ENCODE measurements at regions of chr2 and their contacts with region 1.

Region 1: GRCh38 chr2:101361121-101361870 is 26.0 kb downstream of the CREG2 start:
- DNase-seq: peak; percentile 40
- ATAC-seq: peak; percentile 75
- H3K4me3 Mint-ChIP-seq: no peak overlapping the region
- H3K27ac Mint-ChIP-seq: no peak overlapping the region
- H3K4me1 Mint-ChIP-seq: peaks cover 15% of the 10 kb centered on the region
- H3K27me3 Mint-ChIP-seq: no peaks in the 10 kb centered on the region
- CTCF ChIP-seq: no peak

Region 2: GRCh38 chr2:101281482-101281881 is 79.8 kb before region 1 on chr2:
- CTCF ChIA-PET with region 1: no interaction called
- POLR2A ChIA-PET with region 1: no interaction called
- intact Hi-C with region 1: no loop called
- DNase-seq: no peak
- ATAC-seq: no peak
- H3K4me3 Mint-ChIP-seq: no peak overlapping the region
- H3K27ac Mint-ChIP-seq: no peak overlapping the region
- H3K4me1 Mint-ChIP-seq: peaks cover 12% of the 10 kb centered on the region
- H3K27me3 Mint-ChIP-seq: no peaks in the 10 kb centered on the region
- CTCF ChIP-seq: no peak

Region 3: DNA sequence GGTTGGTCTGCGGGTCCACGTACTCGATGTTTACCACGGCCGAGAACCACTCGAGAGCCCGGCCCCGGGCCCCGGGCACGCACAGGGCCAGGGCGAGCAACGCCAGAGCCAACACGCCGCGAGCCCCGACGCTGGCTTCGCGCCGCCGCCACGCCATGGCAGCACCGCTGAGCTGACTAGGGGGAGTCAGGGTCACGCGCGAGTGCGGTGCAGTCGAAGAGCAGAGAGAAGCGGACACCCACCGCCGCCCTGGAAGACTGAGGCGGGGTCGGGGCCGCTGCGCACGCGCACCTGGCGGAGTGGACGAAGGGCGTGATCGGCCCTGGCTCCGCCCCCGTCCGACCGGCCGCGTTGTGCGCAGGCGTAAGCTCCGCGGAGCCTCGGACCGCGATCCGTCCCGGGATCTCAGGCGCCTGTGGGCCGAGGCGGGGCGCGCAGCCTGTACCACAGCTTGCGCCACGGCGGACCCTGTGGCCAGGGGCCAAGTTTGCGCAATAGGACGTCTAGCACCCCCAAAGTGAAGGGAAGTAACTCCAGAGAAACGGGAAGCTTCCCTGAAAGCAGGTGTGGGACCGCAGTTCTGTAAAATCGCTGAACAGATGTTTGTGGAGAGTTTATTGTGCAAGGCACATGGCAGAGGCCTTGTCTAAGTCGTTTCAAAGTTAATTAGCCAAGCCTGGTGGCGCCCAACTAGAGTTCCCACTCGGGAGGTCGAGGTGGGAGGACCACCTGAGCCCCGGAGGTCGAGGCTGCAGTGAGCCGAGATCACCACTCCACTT is 52.7 kb before region 1 on chr2 and contains the start of gene RNF149:
- CTCF ChIA-PET with region 1: no interaction called
- POLR2A ChIA-PET with region 1: no interaction called
- intact Hi-C with region 1: no loop called
- DNase-seq: peak; percentile 91
- ATAC-seq: peak; percentile 77
- H3K4me3 Mint-ChIP-seq: peak within 1 kb of the TSS; percentile 95
- H3K27ac Mint-ChIP-seq: peak within 1 kb of the TSS; percentile 98
- H3K4me1 Mint-ChIP-seq: peaks cover 58% of the 10 kb centered on the region
- H3K27me3 Mint-ChIP-seq: no peaks in the 10 kb centered on the region
- CTCF ChIP-seq: no peak
- total RNA-seq, gene RNF149: 48.7 to 53.2 TPM

Region 4: GRCh38 chr2:101349893-101350662 is 11.2 kb before region 1 on chr2:
- CTCF ChIA-PET with region 1: interaction called, 20 read pairs
- POLR2A ChIA-PET with region 1: no interaction called
- intact Hi-C with region 1: no loop called
- DNase-seq: no peak
- ATAC-seq: no peak
- H3K4me3 Mint-ChIP-seq: no peak overlapping the region
- H3K27ac Mint-ChIP-seq: no peak overlapping the region
- H3K4me1 Mint-ChIP-seq: peaks cover 3% of the 10 kb centered on the region
- H3K27me3 Mint-ChIP-seq: no peaks in the 10 kb centered on the region
- CTCF ChIP-seq: no peak

Region 5: GRCh38 chr2:101380376-101380775 is 19.1 kb after region 1 on chr2:
- CTCF ChIA-PET with region 1: no interaction called
- POLR2A ChIA-PET with region 1: no interaction called
- intact Hi-C with region 1: no loop called
- DNase-seq: no peak
- ATAC-seq: no peak
- H3K4me3 Mint-ChIP-seq: no peak overlapping the region
- H3K27ac Mint-ChIP-seq: no peak overlapping the region
- H3K4me1 Mint-ChIP-seq: no peaks in the 10 kb centered on the region
- H3K27me3 Mint-ChIP-seq: peaks cover 4% of the 10 kb centered on the region
- CTCF ChIP-seq: no peak

Region 6: GRCh38 chr2:101597351-101597944 is 236.2 kb after region 1 on chr2:
- CTCF ChIA-PET with region 1: no interaction called
- POLR2A ChIA-PET with region 1: no interaction called
- intact Hi-C with region 1: no loop called
- DNase-seq: no peak
- ATAC-seq: no peak
- H3K4me3 Mint-ChIP-seq: no peak overlapping the region
- H3K27ac Mint-ChIP-seq: no peak overlapping the region
- H3K4me1 Mint-ChIP-seq: peaks cover 2% of the 10 kb centered on the region
- H3K27me3 Mint-ChIP-seq: no peaks in the 10 kb centered on the region
- CTCF ChIP-seq: no peak